CD4-positive, alpha-beta memory T cell (primary cell): ENCODE measurements at regions of chr7 and their contacts with region 1.

Region 1: GRCh38 chr7:30348083-30348560 is 63.7 kb downstream of the ZNRF2 start:
- DNase-seq: peak; percentile 78 to 88 (median 85)
- H3K4me3 ChIP-seq: peak overlapping the region in 1 of 2 donors; percentile 23
- H3K4me3 Mint-ChIP-seq: peak overlapping the region; percentile 51 to 84 (median 76)
- H3K27ac ChIP-seq: peak overlapping the region; percentile 58
- H3K27ac Mint-ChIP-seq: peak overlapping the region; percentile 87 to 97 (median 96)
- H3K4me1 ChIP-seq: peaks cover 76% of the 10 kb centered on the region
- H3K4me1 Mint-ChIP-seq: peaks cover 42 to 75% (median 61%) of the 10 kb centered on the region in 4 donors
- H3K27me3 ChIP-seq: no peaks in the 10 kb centered on the region
- H3K27me3 Mint-ChIP-seq: no peaks in the 10 kb centered on the region

Region 2: GRCh38 chr7:30026229-30027064 is 321.7 kb before region 1 on chr7 and contains the start of gene FKBP14:
- CTCF ChIA-PET with region 1: no interaction called
- POLR2A ChIA-PET with region 1: interaction called, 9 read pairs
- intact Hi-C with region 1: loop called (anchors 2 kb)
- DNase-seq: peak; percentile 88 to 94 (median 91)
- H3K4me3 ChIP-seq: peak within 1 kb of the TSS; percentile 70 to 87
- H3K4me3 Mint-ChIP-seq: peak within 1 kb of the TSS in 5 of 8 donors; percentile 94 to 98 (median 95)
- H3K27ac ChIP-seq: peak within 1 kb of the TSS; percentile 63
- H3K27ac Mint-ChIP-seq: peak within 1 kb of the TSS; percentile 85 to 95 (median 93)
- H3K4me1 ChIP-seq: peaks cover 45% of the 10 kb centered on the region
- H3K4me1 Mint-ChIP-seq: peaks cover 26 to 47% (median 36%) of the 10 kb centered on the region in 4 donors
- H3K27me3 ChIP-seq: no peaks in the 10 kb centered on the region
- H3K27me3 Mint-ChIP-seq: no peaks in the 10 kb centered on the region
- total RNA-seq, gene FKBP14: 6.0 to 6.3 TPM

Region 3: GRCh38 chr7:30164567-30164966 is 183.6 kb before region 1 on chr7:
- CTCF ChIA-PET with region 1: interaction called, 5 read pairs
- POLR2A ChIA-PET with region 1: no interaction called
- intact Hi-C with region 1: loop called (anchors 1 kb)
- DNase-seq: peak in 1 of 5 donors; percentile 20
- H3K4me3 ChIP-seq: no peak overlapping the region
- H3K4me3 Mint-ChIP-seq: no peak overlapping the region
- H3K27ac ChIP-seq: no peak overlapping the region
- H3K27ac Mint-ChIP-seq: no peak overlapping the region
- H3K4me1 ChIP-seq: peaks cover 15% of the 10 kb centered on the region
- H3K4me1 Mint-ChIP-seq: peaks cover 12 to 30% (median 20%) of the 10 kb centered on the region in 4 donors
- H3K27me3 ChIP-seq: no peaks in the 10 kb centered on the region
- H3K27me3 Mint-ChIP-seq: no peaks in the 10 kb centered on the region

Region 4: DNA sequence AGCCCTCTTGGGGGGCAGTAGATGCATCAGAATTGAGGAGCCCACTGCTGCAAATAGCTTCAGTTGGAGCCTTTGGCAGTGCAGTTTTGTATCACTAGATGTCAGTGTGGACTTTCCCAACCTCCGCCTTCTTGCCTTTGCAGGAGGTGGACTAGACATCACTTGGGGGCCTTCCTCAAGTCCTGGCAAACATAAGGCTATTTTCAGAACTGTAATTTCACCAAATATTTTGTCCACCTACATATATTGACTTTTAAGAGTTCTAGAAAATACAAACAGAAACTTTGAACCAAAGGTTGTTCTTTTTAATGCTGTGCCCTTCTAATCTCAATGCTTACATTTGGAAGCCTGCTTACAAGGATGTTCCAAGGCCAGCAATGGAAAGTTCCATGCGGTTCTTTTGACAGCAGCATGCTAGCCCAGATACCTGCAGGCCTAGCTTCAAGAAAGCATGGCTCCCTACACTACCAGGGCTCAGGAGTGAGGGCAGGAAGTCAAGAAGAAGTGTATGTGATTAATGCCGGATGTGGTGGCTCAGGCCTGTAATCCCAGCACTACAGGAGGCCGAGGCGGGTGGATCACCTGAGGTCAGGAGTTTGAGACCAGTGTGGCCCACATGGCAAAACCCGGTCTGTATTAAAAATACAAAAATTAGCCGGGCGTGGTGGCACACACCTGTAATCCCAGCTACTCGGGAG is 71.8 kb before region 1 on chr7:
- CTCF ChIA-PET with region 1: interaction called, 94 read pairs
- POLR2A ChIA-PET with region 1: interaction called, 10 read pairs
- intact Hi-C with region 1: loop called (anchors 1 kb)
- DNase-seq: peak; percentile 41 to 53 (median 44)
- H3K4me3 ChIP-seq: no peak overlapping the region
- H3K4me3 Mint-ChIP-seq: peak overlapping the region in 1 of 8 donors; percentile 20
- H3K27ac ChIP-seq: no peak overlapping the region
- H3K27ac Mint-ChIP-seq: no peak overlapping the region
- H3K4me1 ChIP-seq: no peaks in the 10 kb centered on the region
- H3K4me1 Mint-ChIP-seq: peaks cover 3 to 8% (median 4%) of the 10 kb centered on the region in 4 donors
- H3K27me3 ChIP-seq: no peaks in the 10 kb centered on the region
- H3K27me3 Mint-ChIP-seq: peaks cover 0 to 1% of the 10 kb centered on the region in 2 donors

Region 5: GRCh38 chr7:30308389-30308788 is 39.7 kb before region 1 on chr7:
- CTCF ChIA-PET with region 1: interaction called, 5 read pairs
- POLR2A ChIA-PET with region 1: interaction called, 15 read pairs
- intact Hi-C with region 1: loop called (anchors 5 kb)
- DNase-seq: no peak
- H3K4me3 ChIP-seq: no peak overlapping the region
- H3K4me3 Mint-ChIP-seq: peak overlapping the region in 1 of 8 donors; percentile 33
- H3K27ac ChIP-seq: no peak overlapping the region
- H3K27ac Mint-ChIP-seq: no peak overlapping the region
- H3K4me1 ChIP-seq: peaks cover 77% of the 10 kb centered on the region
- H3K4me1 Mint-ChIP-seq: peaks cover 48 to 84% (median 65%) of the 10 kb centered on the region in 4 donors
- H3K27me3 ChIP-seq: no peaks in the 10 kb centered on the region
- H3K27me3 Mint-ChIP-seq: no peaks in the 10 kb centered on the region

Region 6: DNA sequence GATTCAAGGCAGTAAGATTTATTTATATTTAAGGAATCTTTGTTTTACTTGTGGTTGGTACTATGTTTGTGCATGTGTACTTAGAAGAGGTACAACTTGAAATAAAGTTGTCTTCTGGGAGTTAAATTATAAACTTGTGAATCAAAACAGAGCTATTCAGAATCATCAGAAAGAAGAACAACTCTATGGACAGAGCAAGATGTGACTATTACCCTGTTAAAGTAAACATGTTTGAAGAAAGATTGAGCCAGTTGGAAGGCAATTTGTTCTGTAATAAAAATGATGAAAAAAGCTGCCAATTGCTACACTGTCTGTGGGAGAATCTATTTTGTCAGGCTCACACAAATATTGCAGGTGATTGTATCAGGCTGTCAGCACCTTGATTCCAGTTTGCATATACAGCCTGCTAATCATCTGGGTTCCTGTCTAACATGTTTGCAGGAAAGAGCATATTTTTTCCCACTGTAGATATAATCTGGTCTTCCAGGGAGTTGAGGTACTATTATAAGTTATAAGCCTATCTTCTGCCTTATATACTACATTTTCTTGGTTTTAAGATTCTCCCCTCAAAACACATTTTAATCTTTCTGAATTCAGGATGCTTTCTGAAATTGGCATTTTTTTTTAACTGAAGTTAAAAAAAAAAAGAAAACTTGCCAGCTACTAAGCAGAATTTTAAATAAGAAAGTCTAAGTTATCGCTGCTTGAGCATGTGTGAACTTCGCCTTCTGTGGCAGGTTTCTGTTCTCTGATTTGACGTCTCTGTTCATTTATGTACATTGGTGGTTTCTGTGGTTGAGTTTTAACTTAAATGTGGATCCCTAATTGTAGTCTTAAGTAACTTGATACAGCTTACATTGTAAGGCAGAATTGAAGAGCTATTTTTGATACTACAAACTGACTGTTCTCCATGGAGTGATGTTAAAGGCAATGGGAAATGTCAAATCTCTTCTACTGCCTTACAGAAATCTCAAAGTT is 17.7 kb before region 1 on chr7:
- CTCF ChIA-PET with region 1: interaction called, 55 read pairs
- POLR2A ChIA-PET with region 1: interaction called, 77 read pairs
- intact Hi-C with region 1: loop called (anchors 2 kb)
- DNase-seq: peak; percentile 45 to 71 (median 67)
- H3K4me3 ChIP-seq: peak overlapping the region in 1 of 2 donors; percentile 23
- H3K4me3 Mint-ChIP-seq: peak overlapping the region; percentile 54 to 87 (median 69)
- H3K27ac ChIP-seq: peak overlapping the region; percentile 30
- H3K27ac Mint-ChIP-seq: peak overlapping the region; percentile 56 to 91 (median 88)
- H3K4me1 ChIP-seq: peaks cover 58% of the 10 kb centered on the region
- H3K4me1 Mint-ChIP-seq: peaks cover 54 to 75% (median 65%) of the 10 kb centered on the region in 4 donors
- H3K27me3 ChIP-seq: no peaks in the 10 kb centered on the region
- H3K27me3 Mint-ChIP-seq: no peaks in the 10 kb centered on the region

Region 7: GRCh38 chr7:30504347-30505173 is 156.4 kb after region 1 on chr7 and contains the start of gene GGCT:
- CTCF ChIA-PET with region 1: no interaction called
- POLR2A ChIA-PET with region 1: no interaction called
- intact Hi-C with region 1: loop called (anchors 2 kb)
- DNase-seq: peak; percentile 94 to 98 (median 96)
- H3K4me3 ChIP-seq: peak within 1 kb of the TSS; percentile 96 to 97
- H3K4me3 Mint-ChIP-seq: peak within 1 kb of the TSS; percentile 90 to 96 (median 94)
- H3K27ac ChIP-seq: peak within 1 kb of the TSS; percentile 72
- H3K27ac Mint-ChIP-seq: peak within 1 kb of the TSS; percentile 76 to 98 (median 94)
- H3K4me1 ChIP-seq: peaks cover 26% of the 10 kb centered on the region
- H3K4me1 Mint-ChIP-seq: peaks cover 26 to 32% (median 30%) of the 10 kb centered on the region in 4 donors
- H3K27me3 ChIP-seq: no peaks in the 10 kb centered on the region
- H3K27me3 Mint-ChIP-seq: no peaks in the 10 kb centered on the region
- total RNA-seq, gene GGCT: 11.0 to 11.9 TPM